Naive thymus-derived CD4-positive, alpha-beta T cell (primary cell): ENCODE measurements at regions of chr6 and their contacts with region 1.

Region 1: DNA sequence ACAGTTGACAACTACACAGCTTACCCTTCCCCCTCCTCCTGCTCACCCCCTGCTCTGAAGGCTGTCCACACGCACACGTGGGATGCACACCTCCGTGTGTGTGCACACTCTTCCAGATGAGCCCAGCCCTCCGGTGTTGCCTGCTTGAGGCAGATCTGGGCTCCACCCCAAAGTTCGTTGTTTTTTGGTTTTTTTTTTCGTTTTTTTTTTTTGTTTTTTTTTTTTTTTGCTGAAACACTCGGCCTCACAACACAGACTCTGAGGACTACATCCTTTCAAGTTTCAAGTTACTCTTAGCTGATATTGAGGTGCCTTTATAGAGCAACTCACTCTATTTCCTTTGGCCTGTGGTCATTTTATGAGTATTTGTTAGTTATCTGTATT is 88.2 kb downstream of the RREB1 start:
- DNase-seq: peak in 7 of 9 donors; percentile 12 to 49 (median 34)
- ATAC-seq: peak; percentile 57
- H3K4me3 ChIP-seq: no peak overlapping the region
- H3K4me3 Mint-ChIP-seq: peak overlapping the region; percentile 29 to 84 (median 72)
- H3K27ac ChIP-seq: peak overlapping the region; percentile 30
- H3K27ac Mint-ChIP-seq: peak overlapping the region in 8 of 9 donors; percentile 62 to 95 (median 91)
- H3K4me1 ChIP-seq: peaks cover 0 to 22% of the 10 kb centered on the region in 2 donors
- H3K4me1 Mint-ChIP-seq: peaks cover 23 to 71% (median 48%) of the 10 kb centered on the region in 7 donors
- H3K27me3 ChIP-seq: no peaks in the 10 kb centered on the region
- H3K27me3 Mint-ChIP-seq: no peaks in the 10 kb centered on the region

Region 2: GRCh38 chr6:7145885-7146828 is 49.9 kb before region 1 on chr6:
- CTCF ChIA-PET with region 1: no interaction called
- POLR2A ChIA-PET with region 1: interaction called, 3 read pairs
- intact Hi-C with region 1: loop called in 1 of 2 experiments (anchors 5 kb)
- DNase-seq: no peak
- ATAC-seq: peak; percentile 71
- H3K4me3 ChIP-seq: peak overlapping the region; percentile 10
- H3K4me3 Mint-ChIP-seq: peak overlapping the region; percentile 70 to 83 (median 82)
- H3K27ac ChIP-seq: peak overlapping the region; percentile 63
- H3K27ac Mint-ChIP-seq: peak overlapping the region; percentile 55 to 96 (median 89)
- H3K4me1 ChIP-seq: peaks cover 17 to 27% of the 10 kb centered on the region in 2 donors
- H3K4me1 Mint-ChIP-seq: peaks cover 50 to 89% (median 76%) of the 10 kb centered on the region in 7 donors
- H3K27me3 ChIP-seq: no peaks in the 10 kb centered on the region
- H3K27me3 Mint-ChIP-seq: no peaks in the 10 kb centered on the region

Region 3: GRCh38 chr6:7165002-7165889 is 30.8 kb before region 1 on chr6:
- CTCF ChIA-PET with region 1: no interaction called
- POLR2A ChIA-PET with region 1: no interaction called
- intact Hi-C with region 1: no loop called
- DNase-seq: no peak
- ATAC-seq: no peak
- H3K4me3 ChIP-seq: no peak overlapping the region
- H3K4me3 Mint-ChIP-seq: no peak overlapping the region
- H3K27ac ChIP-seq: no peak overlapping the region
- H3K27ac Mint-ChIP-seq: peak overlapping the region in 1 of 9 donors; percentile 8
- H3K4me1 ChIP-seq: peaks cover 0 to 20% of the 10 kb centered on the region in 2 donors
- H3K4me1 Mint-ChIP-seq: peaks cover 18 to 95% (median 75%) of the 10 kb centered on the region in 7 donors
- H3K27me3 ChIP-seq: no peaks in the 10 kb centered on the region
- H3K27me3 Mint-ChIP-seq: no peaks in the 10 kb centered on the region

Region 4: GRCh38 chr6:7176208-7176607 is 19.8 kb before region 1 on chr6:
- CTCF ChIA-PET with region 1: no interaction called
- POLR2A ChIA-PET with region 1: interaction called, 10 read pairs
- intact Hi-C with region 1: no loop called
- DNase-seq: no peak
- ATAC-seq: no peak
- H3K4me3 ChIP-seq: no peak overlapping the region
- H3K4me3 Mint-ChIP-seq: no peak overlapping the region
- H3K27ac ChIP-seq: no peak overlapping the region
- H3K27ac Mint-ChIP-seq: no peak overlapping the region
- H3K4me1 ChIP-seq: no peaks in the 10 kb centered on the region
- H3K4me1 Mint-ChIP-seq: peaks cover 5 to 24% (median 19%) of the 10 kb centered on the region in 7 donors
- H3K27me3 ChIP-seq: no peaks in the 10 kb centered on the region
- H3K27me3 Mint-ChIP-seq: no peaks in the 10 kb centered on the region